IMR-90 (cell line): ENCODE measurements at regions of chr11 and their contacts with region 1.

Region 1: DNA sequence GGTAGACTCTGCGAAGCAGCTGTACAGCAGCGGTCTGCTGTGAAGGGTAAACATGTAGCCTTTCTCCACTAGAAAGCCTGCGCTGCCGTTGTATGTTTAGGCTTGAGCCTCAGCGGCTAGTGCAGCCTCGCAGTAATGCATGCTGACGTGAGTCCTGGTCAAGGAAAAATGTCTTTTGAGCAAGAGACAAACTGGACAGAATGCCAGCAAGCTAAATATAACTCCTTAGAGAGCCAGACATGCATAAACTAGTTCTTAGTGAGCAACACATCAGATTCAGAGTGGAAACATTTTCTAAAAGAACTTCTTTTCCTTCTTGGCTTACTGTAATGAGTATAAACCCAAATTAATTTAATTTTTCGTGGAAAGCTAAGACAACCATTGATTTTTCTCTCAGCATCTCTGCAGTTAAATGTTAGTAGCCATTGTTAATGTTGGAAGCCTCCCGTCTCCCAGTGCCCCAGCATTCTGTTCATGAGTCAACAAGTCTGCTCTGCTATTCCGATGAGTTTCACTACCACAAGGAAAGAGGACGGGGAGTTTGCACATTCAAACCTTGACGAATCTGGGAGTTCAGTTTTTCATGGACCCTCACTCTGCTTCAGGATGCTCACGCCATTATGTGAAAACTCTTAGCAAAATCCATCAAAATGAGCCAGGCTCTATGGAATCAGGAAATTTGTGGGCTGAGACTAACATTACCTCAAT is 51.4 kb downstream of the JAM3 start:
- DNase-seq: peak; percentile 97
- ATAC-seq: peak; percentile 93
- H3K4me3 ChIP-seq: peak overlapping the region; percentile 16; the same call in 1 of the 2 replicates
- H3K27ac ChIP-seq: peak overlapping the region; percentile 96; the same call in 1 of the 2 replicates
- H3K4me1 ChIP-seq: peaks cover 16% of the 10 kb centered on the region
- H3K27me3 ChIP-seq: no peaks in the 10 kb centered on the region
- CTCF ChIP-seq: no peak
- POLR2A ChIP-seq: peak; percentile 61; the same call in 1 of the 2 replicates
- RAD21 ChIP-seq: no peak

Region 2: GRCh38 chr11:134068829-134069425 is 51.4 kb before region 1 on chr11 and contains the start of gene JAM3:
- CTCF ChIA-PET with region 1: no interaction called
- POLR2A ChIA-PET with region 1: interaction called, 3 read pairs
- dilution Hi-C with region 1: no loop called
- in situ Hi-C with region 1: no loop called
- intact Hi-C with region 1: loop called (anchors 1 kb)
- DNase-seq: peak; percentile 90
- ATAC-seq: peak; percentile 92
- H3K4me3 ChIP-seq: peak within 1 kb of the TSS; percentile 64
- H3K27ac ChIP-seq: peak within 1 kb of the TSS; percentile 67
- H3K4me1 ChIP-seq: no peaks in the 10 kb centered on the region
- H3K27me3 ChIP-seq: peaks cover 9% of the 10 kb centered on the region
- CTCF ChIP-seq: no peak
- POLR2A ChIP-seq: peak; percentile 69; the same call in 1 of the 2 replicates
- RAD21 ChIP-seq: peak; percentile 23; the same call in 1 of the 2 replicates
- total RNA-seq, gene JAM3: 71.5 and 102 TPM in 2 replicates

Region 3: GRCh38 chr11:134082990-134083389 is 37.3 kb before region 1 on chr11:
- CTCF ChIA-PET with region 1: interaction called, 3 read pairs
- POLR2A ChIA-PET with region 1: no interaction called
- dilution Hi-C with region 1: no loop called
- in situ Hi-C with region 1: no loop called
- intact Hi-C with region 1: loop called (anchors 5 kb)
- DNase-seq: no peak
- ATAC-seq: no peak
- H3K4me3 ChIP-seq: no peak overlapping the region
- H3K27ac ChIP-seq: no peak overlapping the region
- H3K4me1 ChIP-seq: no peaks in the 10 kb centered on the region; the same call in 1 of the 2 replicates
- H3K27me3 ChIP-seq: no peaks in the 10 kb centered on the region
- CTCF ChIP-seq: no peak
- POLR2A ChIP-seq: no peak
- RAD21 ChIP-seq: no peak